Mammary epithelial cell (primary cell): ENCODE measurements at regions of chr22 and their contacts with region 1.

Region 1: DNA sequence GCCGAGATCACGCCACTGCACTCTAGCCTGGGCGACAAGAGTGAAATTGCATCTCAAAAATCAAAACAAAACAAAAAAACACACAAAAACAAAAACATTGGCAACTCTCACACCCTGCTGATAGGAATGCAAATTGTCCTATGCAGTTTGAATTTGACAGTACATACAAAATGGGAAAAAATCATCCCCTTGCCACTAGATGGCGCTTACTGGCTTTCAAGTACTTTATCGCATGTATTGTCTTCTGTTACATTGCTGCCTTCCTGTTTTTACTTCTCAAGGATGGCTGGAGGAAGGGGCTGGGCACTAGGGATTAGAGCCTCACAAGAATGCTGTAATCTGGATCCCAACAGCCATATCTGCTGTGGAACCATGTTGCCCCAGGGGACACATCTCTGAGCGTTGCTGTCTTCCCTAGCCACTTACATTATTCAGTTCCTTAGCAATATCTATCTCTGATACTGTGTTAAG is 59.4 kb upstream of the A4GALT start:
- DNase-seq: peak; percentile 72
- H3K4me3 ChIP-seq: no peak overlapping the region
- H3K27ac ChIP-seq: no peak overlapping the region
- H3K4me1 ChIP-seq: no peaks in the 10 kb centered on the region
- H3K27me3 ChIP-seq: no peaks in the 10 kb centered on the region
- CTCF ChIP-seq: peak; percentile 82 to 97

Region 2: GRCh38 chr22:42621505-42622002 is 158.6 kb before region 1 on chr22:
- CTCF ChIA-PET with region 1: no interaction called
- dilution Hi-C with region 1: no loop called
- in situ Hi-C with region 1: no loop called
- intact Hi-C with region 1: loop called (anchors 1 kb)
- DNase-seq: peak; percentile 55
- H3K4me3 ChIP-seq: no peak overlapping the region
- H3K27ac ChIP-seq: peak overlapping the region; percentile 53
- H3K4me1 ChIP-seq: peaks cover 24% of the 10 kb centered on the region
- H3K27me3 ChIP-seq: no peaks in the 10 kb centered on the region
- CTCF ChIP-seq: peak; percentile 90 to 96

Region 3: DNA sequence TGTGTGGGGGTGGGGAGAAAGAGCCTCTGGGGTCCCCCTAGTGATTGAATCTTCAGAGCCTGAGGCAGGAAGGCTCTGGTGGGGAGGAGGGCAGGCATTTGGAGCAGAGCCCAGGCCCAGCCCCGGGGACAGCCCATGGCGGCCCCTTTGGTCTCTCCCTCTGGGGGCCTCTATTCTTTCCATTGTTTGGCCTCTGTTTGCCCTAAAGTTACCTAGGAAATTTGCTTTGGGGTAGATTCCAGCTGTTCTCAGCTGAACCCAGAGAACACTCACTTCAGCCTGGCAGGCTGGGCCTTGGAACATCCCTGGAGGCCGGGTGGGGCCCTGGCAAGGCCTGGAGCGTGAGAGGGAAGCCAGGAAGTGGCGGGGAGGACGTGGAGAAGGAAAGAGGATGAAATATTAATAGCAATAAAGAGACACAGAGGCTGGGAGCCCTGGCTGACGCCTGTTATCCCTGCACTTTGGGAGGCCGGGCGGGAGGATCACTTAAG is 36.6 kb before region 1 on chr22:
- CTCF ChIA-PET with region 1: no interaction called
- dilution Hi-C with region 1: loop called (anchors 5 kb)
- in situ Hi-C with region 1: no loop called
- intact Hi-C with region 1: no loop called
- DNase-seq: no peak
- H3K4me3 ChIP-seq: no peak overlapping the region
- H3K27ac ChIP-seq: no peak overlapping the region
- H3K4me1 ChIP-seq: peaks cover 18% of the 10 kb centered on the region
- H3K27me3 ChIP-seq: no peaks in the 10 kb centered on the region
- CTCF ChIP-seq: no peak

Region 4: DNA sequence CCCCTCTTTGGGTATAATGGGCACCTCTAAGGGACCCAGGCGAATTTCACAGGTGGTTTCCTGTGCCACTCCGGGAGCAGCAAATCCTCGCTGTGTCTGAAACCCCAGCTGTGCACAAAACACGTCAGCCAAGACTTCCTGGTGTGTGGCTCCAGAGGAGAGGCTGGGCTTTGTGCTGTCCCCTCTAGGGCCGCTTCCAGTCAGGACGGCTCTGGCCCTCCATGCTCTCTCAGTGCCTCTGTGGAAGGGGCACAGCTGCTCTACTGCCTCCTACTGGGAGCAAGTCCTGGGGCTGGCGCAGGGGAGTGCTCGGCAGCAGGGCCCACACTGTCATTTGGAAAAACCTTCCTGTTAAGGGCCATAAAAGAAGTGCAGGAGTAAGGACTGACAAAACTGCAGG is 100.7 kb after region 1 on chr22:
- CTCF ChIA-PET with region 1: no interaction called
- dilution Hi-C with region 1: loop called (anchors 5 kb)
- in situ Hi-C with region 1: no loop called
- intact Hi-C with region 1: no loop called
- DNase-seq: no peak
- H3K4me3 ChIP-seq: no peak overlapping the region
- H3K27ac ChIP-seq: no peak overlapping the region
- H3K4me1 ChIP-seq: no peaks in the 10 kb centered on the region
- H3K27me3 ChIP-seq: no peaks in the 10 kb centered on the region
- CTCF ChIP-seq: peak in 1 of 2 donors; percentile 6

Region 5: DNA sequence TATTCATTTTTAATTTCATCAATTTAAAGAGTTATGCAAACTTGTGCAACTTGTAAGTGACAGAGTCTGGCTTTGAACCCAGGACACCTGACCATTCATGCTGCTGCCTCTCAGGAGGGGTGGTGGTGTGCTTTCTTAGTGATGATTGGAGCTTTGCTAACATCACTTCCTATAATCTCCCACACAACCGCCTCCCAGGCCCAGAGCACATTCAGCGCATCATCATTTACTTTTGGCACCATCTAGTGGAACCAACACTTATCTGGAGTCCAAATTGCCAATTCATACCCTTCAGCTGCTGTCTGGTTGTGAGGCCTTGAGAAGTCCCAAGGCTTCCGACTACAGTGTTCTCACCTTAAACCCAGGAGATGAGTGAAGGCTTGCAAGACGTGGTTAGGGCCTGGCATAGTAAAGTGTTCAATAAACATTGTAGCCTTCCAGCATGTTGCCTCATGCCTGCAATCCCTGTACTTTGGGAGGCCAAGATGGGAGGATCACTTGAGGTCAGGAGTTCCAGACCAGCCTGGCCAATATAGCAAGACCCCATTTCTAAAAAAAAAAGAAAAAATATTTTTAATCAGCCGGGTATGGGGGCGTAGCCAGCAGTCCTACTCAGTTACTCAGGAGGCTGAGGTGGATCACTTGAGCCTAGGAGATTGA is 310.2 kb after region 1 on chr22:
- CTCF ChIA-PET with region 1: no interaction called
- dilution Hi-C with region 1: no loop called
- in situ Hi-C with region 1: no loop called
- intact Hi-C with region 1: loop called (anchors 1 kb)
- DNase-seq: peak; percentile 89
- H3K4me3 ChIP-seq: no peak overlapping the region
- H3K27ac ChIP-seq: no peak overlapping the region
- H3K4me1 ChIP-seq: peaks cover 15% of the 10 kb centered on the region
- H3K27me3 ChIP-seq: no peaks in the 10 kb centered on the region
- CTCF ChIP-seq: peak; percentile 45 to 69